Common myeloid progenitor, CD34-positive (primary cell): ENCODE measurements at regions of chr4 and their contacts with region 1.

Region 1: GRCh38 chr4:184437565-184438265 is 36.6 kb downstream of the IRF2 start:
- DNase-seq: peak in 2 of 3 donors; percentile 54 to 58
- H3K4me3 ChIP-seq: peak overlapping the region in 3 of 7 experiments; percentile 5 to 16 (median 13)
- H3K27ac ChIP-seq: no peak overlapping the region
- H3K4me1 ChIP-seq: peaks cover 8 to 24% (median 16%) of the 10 kb centered on the region in 4 experiments
- H3K27me3 ChIP-seq: no peaks in the 10 kb centered on the region

Region 2: DNA sequence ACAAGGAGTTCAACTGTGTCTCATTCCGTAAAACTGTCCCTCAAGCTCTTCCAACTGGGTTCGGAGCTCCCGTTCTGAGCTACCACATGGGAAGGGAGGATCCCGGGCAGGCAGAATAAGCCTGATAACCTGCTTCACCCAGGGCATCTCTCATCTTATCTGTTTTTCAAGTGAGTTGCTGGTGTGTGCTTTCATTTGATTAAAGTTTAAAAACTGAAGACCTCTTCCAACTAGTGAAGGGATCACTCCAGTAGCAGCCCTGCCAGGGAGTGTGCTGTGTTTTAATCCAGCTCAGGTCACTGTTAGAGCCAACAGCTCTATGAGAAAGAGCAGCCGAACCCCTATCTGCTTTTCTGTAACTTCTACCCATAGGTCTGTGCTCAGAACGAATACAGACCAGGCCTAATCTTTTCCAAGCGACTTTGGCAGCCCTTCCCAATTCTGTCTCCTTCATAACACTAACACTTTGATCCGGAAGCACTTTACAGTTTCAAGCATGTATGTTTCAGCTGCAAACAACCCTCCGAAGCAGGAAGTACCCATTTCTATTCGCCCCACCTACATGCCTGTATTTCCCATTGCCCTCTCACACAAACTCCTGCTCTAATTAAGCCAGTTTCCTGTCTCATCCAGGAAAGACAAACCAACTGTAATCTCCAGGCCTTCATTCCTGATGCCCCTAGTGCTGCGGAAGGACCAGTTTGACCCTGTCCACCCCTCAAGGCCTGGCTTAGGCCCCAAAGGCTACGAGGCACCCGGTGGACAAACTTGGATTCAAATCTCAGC is 24.3 kb before region 1 on chr4:
- CTCF ChIA-PET with region 1: interaction called, 10 read pairs
- POLR2A ChIA-PET with region 1: no interaction called
- DNase-seq: peak in 1 of 3 donors; percentile 18
- H3K4me3 ChIP-seq: no peak overlapping the region
- H3K27ac ChIP-seq: no peak overlapping the region
- H3K4me1 ChIP-seq: peaks cover 18 to 62% (median 53%) of the 10 kb centered on the region in 4 experiments
- H3K27me3 ChIP-seq: no peaks in the 10 kb centered on the region

Region 3: DNA sequence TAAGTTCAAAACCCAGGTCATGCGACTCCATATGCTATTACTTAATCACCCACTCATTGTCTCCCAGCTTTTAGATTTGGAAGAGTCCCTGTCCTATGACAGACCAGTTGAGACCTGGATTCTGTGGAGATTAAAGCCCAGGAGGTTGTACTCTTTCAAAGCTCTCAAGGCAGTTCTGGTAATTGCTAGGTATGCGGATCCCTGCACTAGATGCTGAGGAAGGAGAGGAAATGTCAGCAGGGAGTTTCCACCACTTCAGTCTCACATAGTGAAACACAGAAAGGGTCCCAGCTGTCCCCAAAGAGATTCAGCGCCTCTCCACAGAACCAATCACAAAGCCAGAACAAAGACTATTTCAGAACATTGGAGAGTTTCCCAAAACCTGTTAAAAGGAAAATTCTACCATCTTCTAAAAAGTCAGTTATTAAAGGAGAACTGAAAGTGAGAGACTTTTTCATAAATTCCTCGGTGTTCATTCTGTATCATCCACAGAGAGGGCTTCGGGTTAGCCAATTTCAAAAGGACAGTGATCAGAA is 16.8 kb before region 1 on chr4:
- CTCF ChIA-PET with region 1: interaction called, 11 read pairs
- POLR2A ChIA-PET with region 1: no interaction called
- DNase-seq: no peak
- H3K4me3 ChIP-seq: no peak overlapping the region
- H3K27ac ChIP-seq: no peak overlapping the region
- H3K4me1 ChIP-seq: peaks cover 9 to 19% (median 18%) of the 10 kb centered on the region in 4 experiments
- H3K27me3 ChIP-seq: no peaks in the 10 kb centered on the region

Region 4: GRCh38 chr4:184427687-184428086 is 10.0 kb before region 1 on chr4:
- CTCF ChIA-PET with region 1: interaction called, 10 read pairs
- POLR2A ChIA-PET with region 1: no interaction called
- DNase-seq: no peak
- H3K4me3 ChIP-seq: no peak overlapping the region
- H3K27ac ChIP-seq: no peak overlapping the region
- H3K4me1 ChIP-seq: peaks cover 0 to 2% (median 0%) of the 10 kb centered on the region in 4 experiments
- H3K27me3 ChIP-seq: no peaks in the 10 kb centered on the region